IMR-90 (cell line): ENCODE measurements at regions of chr6 and their contacts with region 1.

Region 1: GRCh38 chr6:5058254-5058653 is 26.9 kb upstream of the PPP1R3G start:
- DNase-seq: no peak
- ATAC-seq: no peak
- H3K4me3 ChIP-seq: no peak overlapping the region
- H3K27ac ChIP-seq: no peak overlapping the region
- H3K4me1 ChIP-seq: peaks cover 5% of the 10 kb centered on the region
- H3K27me3 ChIP-seq: no peaks in the 10 kb centered on the region
- CTCF ChIP-seq: no peak
- POLR2A ChIP-seq: no peak
- RAD21 ChIP-seq: no peak

Region 2: GRCh38 chr6:4914420-4915159 is 143.7 kb before region 1 on chr6:
- CTCF ChIA-PET with region 1: no interaction called
- POLR2A ChIA-PET with region 1: no interaction called
- dilution Hi-C with region 1: no loop called
- in situ Hi-C with region 1: no loop called
- intact Hi-C with region 1: no loop called
- DNase-seq: peak; percentile 69
- ATAC-seq: peak; percentile 83
- H3K4me3 ChIP-seq: no peak overlapping the region
- H3K27ac ChIP-seq: peak overlapping the region; percentile 41; the same call in 1 of the 2 replicates
- H3K4me1 ChIP-seq: peaks cover 14% of the 10 kb centered on the region
- H3K27me3 ChIP-seq: no peaks in the 10 kb centered on the region
- CTCF ChIP-seq: no peak
- POLR2A ChIP-seq: no peak
- RAD21 ChIP-seq: no peak

Region 3: GRCh38 chr6:5080574-5080973 is 22.3 kb after region 1 on chr6:
- CTCF ChIA-PET with region 1: no interaction called
- POLR2A ChIA-PET with region 1: interaction called, 22 read pairs
- dilution Hi-C with region 1: no loop called
- in situ Hi-C with region 1: no loop called
- intact Hi-C with region 1: no loop called
- DNase-seq: peak; percentile 22
- ATAC-seq: no peak
- H3K4me3 ChIP-seq: no peak overlapping the region
- H3K27ac ChIP-seq: no peak overlapping the region
- H3K4me1 ChIP-seq: peaks cover 10% of the 10 kb centered on the region
- H3K27me3 ChIP-seq: no peaks in the 10 kb centered on the region; the same call in none of the 2 replicates
- CTCF ChIP-seq: no peak
- POLR2A ChIP-seq: no peak
- RAD21 ChIP-seq: no peak

Region 4: DNA sequence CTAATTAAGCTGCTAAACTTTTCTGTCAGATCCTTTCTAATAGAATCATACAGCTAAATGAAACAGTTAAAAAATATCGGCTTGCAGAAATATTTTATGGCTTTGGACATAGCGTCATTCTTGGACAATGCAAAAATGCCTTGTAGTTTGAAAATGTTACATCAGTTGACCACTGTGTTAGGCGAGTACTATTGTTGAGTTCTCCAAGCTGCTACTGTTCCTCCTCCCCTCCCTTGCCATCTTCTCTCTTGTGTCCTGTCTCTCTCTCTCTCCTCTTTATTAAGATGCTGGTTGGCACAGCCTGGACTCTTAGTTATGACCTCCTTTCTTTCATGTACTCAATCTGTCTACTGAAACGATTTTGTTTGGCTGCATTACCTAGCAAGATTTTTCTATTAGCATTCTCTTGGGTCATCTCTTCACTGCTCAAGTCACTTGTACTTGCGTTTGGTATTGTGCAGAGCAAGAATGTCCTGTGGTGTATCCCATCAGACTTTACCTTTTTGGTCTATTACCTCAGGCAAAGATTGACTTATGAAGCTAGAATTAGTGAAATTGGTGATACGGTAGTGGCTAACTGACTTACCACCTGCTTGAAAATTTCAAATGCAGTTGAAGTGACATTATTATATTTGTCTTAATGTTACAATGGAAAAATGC is 331.0 kb after region 1 on chr6:
- CTCF ChIA-PET with region 1: no interaction called
- POLR2A ChIA-PET with region 1: no interaction called
- dilution Hi-C with region 1: no loop called
- in situ Hi-C with region 1: no loop called
- intact Hi-C with region 1: loop called (anchors 5 kb)
- DNase-seq: no peak
- ATAC-seq: no peak
- H3K4me3 ChIP-seq: no peak overlapping the region
- H3K27ac ChIP-seq: no peak overlapping the region
- H3K4me1 ChIP-seq: no peaks in the 10 kb centered on the region
- H3K27me3 ChIP-seq: no peaks in the 10 kb centered on the region
- CTCF ChIP-seq: no peak
- POLR2A ChIP-seq: no peak
- RAD21 ChIP-seq: no peak

Region 5: GRCh38 chr6:5645328-5646290 is 587.4 kb after region 1 on chr6:
- CTCF ChIA-PET with region 1: no interaction called
- POLR2A ChIA-PET with region 1: no interaction called
- dilution Hi-C with region 1: no loop called
- in situ Hi-C with region 1: no loop called
- intact Hi-C with region 1: no loop called
- DNase-seq: no peak
- ATAC-seq: no peak
- H3K4me3 ChIP-seq: no peak overlapping the region
- H3K27ac ChIP-seq: no peak overlapping the region
- H3K4me1 ChIP-seq: no peaks in the 10 kb centered on the region
- H3K27me3 ChIP-seq: no peaks in the 10 kb centered on the region
- CTCF ChIP-seq: no peak
- POLR2A ChIP-seq: no peak
- RAD21 ChIP-seq: no peak